Heart right ventricle (tissue), 16 donors: ENCODE measurements at regions of chr22 and their contacts with region 1.

Region 1: GRCh38 chr22:23857606-23858483 is at the start of gene SLC2A11:
- DNase-seq: peak; percentile 96 to 98
- ATAC-seq: peak; percentile 93 to 98 (median 97)
- H3K4me3 ChIP-seq: peak within 1 kb of the TSS; percentile 50 to 82 (median 70)
- H3K27ac ChIP-seq: peak within 1 kb of the TSS; percentile 82 to 97 (median 94)
- H3K4me1 ChIP-seq: peaks cover 0 to 27% (median 15%) of the 10 kb centered on the region in 9 donors
- H3K27me3 ChIP-seq: no peaks in the 10 kb centered on the region
- CTCF ChIP-seq: peak in 4 of 9 donors; percentile 20 to 33 (median 30)
- total RNA-seq, gene SLC2A11: 16.1 to 30.4 (median 21.2) TPM

Region 2: DNA sequence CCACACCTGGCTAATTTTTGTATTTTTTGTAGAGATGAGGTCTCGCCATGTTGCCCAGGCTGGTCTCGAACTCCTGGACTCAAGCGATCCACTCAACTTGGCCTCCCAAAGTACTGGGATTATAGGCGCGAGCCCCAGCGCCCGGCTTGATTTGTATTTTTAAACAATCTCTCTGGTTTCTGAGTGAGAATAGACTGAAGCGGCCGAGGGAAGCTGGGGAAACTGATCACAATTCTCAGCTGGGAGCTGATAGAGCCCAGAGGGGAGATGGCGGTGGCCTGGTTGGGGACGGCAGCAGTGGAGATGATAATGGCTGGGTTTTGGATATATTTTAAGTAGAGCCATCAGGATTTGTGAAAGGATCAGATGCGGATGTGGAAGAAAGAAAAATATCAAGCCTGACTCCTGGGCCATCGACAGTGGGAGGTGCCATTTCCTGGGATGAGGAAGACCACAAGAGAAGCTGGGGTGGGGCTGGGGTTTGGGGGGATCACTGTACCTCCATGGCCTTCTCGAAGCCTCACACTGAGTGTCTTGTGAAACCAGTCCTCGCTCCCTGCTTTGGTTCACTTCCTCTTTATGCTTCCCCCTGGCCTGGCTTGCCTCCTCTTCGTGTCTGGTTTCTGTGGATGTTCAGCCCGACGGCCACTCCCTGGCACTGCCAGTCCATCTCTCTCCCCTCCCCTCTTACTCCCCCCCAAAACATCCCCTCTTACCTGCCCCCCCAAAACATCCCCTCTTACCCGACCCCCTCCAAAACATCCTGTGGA is 329.7 kb before region 1 on chr22:
- intact Hi-C with region 1: loop called in 1 of 10 experiments (anchors 5 kb)
- DNase-seq: no peak
- ATAC-seq: no peak
- H3K4me3 ChIP-seq: no peak overlapping the region
- H3K27ac ChIP-seq: no peak overlapping the region
- H3K4me1 ChIP-seq: peaks cover 0 to 5% (median 0%) of the 10 kb centered on the region in 9 donors
- H3K27me3 ChIP-seq: peaks cover 0 to 7% (median 0%) of the 10 kb centered on the region in 7 donors
- CTCF ChIP-seq: no peak

Region 3: GRCh38 chr22:23622634-23623033 is 235.2 kb before region 1 on chr22:
- intact Hi-C with region 1: loop called in 2 of 10 experiments (anchors 5 to 10 kb)
- DNase-seq: no peak
- ATAC-seq: no peak
- H3K4me3 ChIP-seq: no peak overlapping the region
- H3K27ac ChIP-seq: no peak overlapping the region
- H3K4me1 ChIP-seq: no peaks in the 10 kb centered on the region
- H3K27me3 ChIP-seq: no peaks in the 10 kb centered on the region
- CTCF ChIP-seq: no peak

Region 4: GRCh38 chr22:23893943-23894709 is 36.3 kb after region 1 on chr22 and contains the start of gene MIF:
- intact Hi-C with region 1: loop called in 1 of 10 experiments (anchors 5 kb)
- DNase-seq: peak; percentile 94 to 97
- ATAC-seq: peak; percentile 91 to 98 (median 95)
- H3K4me3 ChIP-seq: peak within 1 kb of the TSS; percentile 49 to 88 (median 70)
- H3K27ac ChIP-seq: peak within 1 kb of the TSS; percentile 71 to 99 (median 92)
- H3K4me1 ChIP-seq: peaks cover 7 to 42% (median 25%) of the 10 kb centered on the region in 9 donors
- H3K27me3 ChIP-seq: no peaks in the 10 kb centered on the region
- CTCF ChIP-seq: peak; percentile 33 to 83 (median 68)
- total RNA-seq, gene MIF: 135 to 457 (median 225) TPM